Psoas muscle (tissue), 8 donors: ENCODE measurements at regions of chr17 and their contacts with region 1.

Region 1: GRCh38 chr17:75109407-75110233 is at the start of gene ARMC7:
- DNase-seq: peak; percentile 88 to 96
- ATAC-seq: peak; percentile 86 to 90 (median 88)
- H3K4me3 ChIP-seq: peak within 1 kb of the TSS; percentile 88
- H3K27ac ChIP-seq: peak within 1 kb of the TSS; percentile 74
- H3K4me1 ChIP-seq: peaks cover 7% of the 10 kb centered on the region
- H3K27me3 ChIP-seq: no peaks in the 10 kb centered on the region
- CTCF ChIP-seq: no peak
- total RNA-seq, gene ARMC7: 2.7 to 7.0 (median 3.6) TPM

Region 2: GRCh38 chr17:75131280-75132017 is 21.8 kb after region 1 on chr17 and contains the start of gene NT5C:
- intact Hi-C with region 1: loop called in 1 of 2 experiments (anchors 1 kb)
- DNase-seq: peak; percentile 88 to 92
- ATAC-seq: peak; percentile 91 to 93 (median 92)
- H3K4me3 ChIP-seq: peak within 1 kb of the TSS; percentile 94
- H3K27ac ChIP-seq: peak within 1 kb of the TSS; percentile 93
- H3K4me1 ChIP-seq: peaks cover 5% of the 10 kb centered on the region
- H3K27me3 ChIP-seq: no peaks in the 10 kb centered on the region
- CTCF ChIP-seq: peak; percentile 68
- total RNA-seq, gene NT5C: 16.4 to 44.2 (median 29.4) TPM

Region 3: GRCh38 chr17:75173526-75173925 is 63.9 kb after region 1 on chr17:
- intact Hi-C with region 1: loop called (anchors 2 to 5 kb)
- DNase-seq: no peak
- ATAC-seq: no peak
- H3K4me3 ChIP-seq: no peak overlapping the region
- H3K27ac ChIP-seq: no peak overlapping the region
- H3K4me1 ChIP-seq: no peaks in the 10 kb centered on the region
- H3K27me3 ChIP-seq: no peaks in the 10 kb centered on the region
- CTCF ChIP-seq: no peak

Region 4: GRCh38 chr17:75182569-75183450 is 73.2 kb after region 1 on chr17 and contains the start of gene SUMO2:
- intact Hi-C with region 1: loop called in 1 of 2 experiments (anchors 5 kb)
- DNase-seq: peak; percentile 95 to 98
- ATAC-seq: peak; percentile 92 to 98 (median 97)
- H3K4me3 ChIP-seq: peak within 1 kb of the TSS; percentile 99
- H3K27ac ChIP-seq: peak within 1 kb of the TSS; percentile 99
- H3K4me1 ChIP-seq: peaks cover 21% of the 10 kb centered on the region
- H3K27me3 ChIP-seq: no peaks in the 10 kb centered on the region
- CTCF ChIP-seq: peak; percentile 38
- total RNA-seq, gene SUMO2: 161 to 203 (median 185) TPM

Region 5: GRCh38 chr17:75199886-75200618 is 90.4 kb after region 1 on chr17:
- intact Hi-C with region 1: loop called (anchors 2 to 5 kb)
- DNase-seq: no peak
- ATAC-seq: no peak
- H3K4me3 ChIP-seq: no peak overlapping the region
- H3K27ac ChIP-seq: no peak overlapping the region
- H3K4me1 ChIP-seq: no peaks in the 10 kb centered on the region
- H3K27me3 ChIP-seq: no peaks in the 10 kb centered on the region
- CTCF ChIP-seq: no peak